Naive thymus-derived CD4-positive, alpha-beta T cell (primary cell): ENCODE measurements at regions of chr2 and their contacts with region 1.

Region 1: GRCh38 chr2:191566344-191566743 is 111.6 kb upstream of the NABP1 start:
- DNase-seq: peak; percentile 16 to 64 (median 42)
- ATAC-seq: peak; percentile 72
- H3K4me3 ChIP-seq: no peak overlapping the region
- H3K4me3 Mint-ChIP-seq: no peak overlapping the region
- H3K27ac ChIP-seq: no peak overlapping the region
- H3K27ac Mint-ChIP-seq: no peak overlapping the region
- H3K4me1 ChIP-seq: peaks cover 8 to 14% of the 10 kb centered on the region in 2 donors
- H3K4me1 Mint-ChIP-seq: peaks cover 14 to 34% (median 22%) of the 10 kb centered on the region in 7 donors
- H3K27me3 ChIP-seq: peaks cover 0 to 7% of the 10 kb centered on the region in 2 donors
- H3K27me3 Mint-ChIP-seq: peaks cover 4 to 69% (median 13%) of the 10 kb centered on the region in 5 donors

Region 2: GRCh38 chr2:191691016-191691735 is 124.8 kb after region 1 on chr2:
- CTCF ChIA-PET with region 1: interaction called, 33 read pairs
- POLR2A ChIA-PET with region 1: interaction called, 8 read pairs
- intact Hi-C with region 1: loop called (anchors 1 kb)
- DNase-seq: peak in 7 of 9 donors; percentile 44 to 69 (median 61)
- ATAC-seq: peak; percentile 93
- H3K4me3 ChIP-seq: no peak overlapping the region
- H3K4me3 Mint-ChIP-seq: no peak overlapping the region
- H3K27ac ChIP-seq: no peak overlapping the region
- H3K27ac Mint-ChIP-seq: peak overlapping the region in 5 of 9 donors; percentile 31 to 61 (median 44)
- H3K4me1 ChIP-seq: peaks cover 3 to 11% of the 10 kb centered on the region in 2 donors
- H3K4me1 Mint-ChIP-seq: peaks cover 8 to 28% (median 15%) of the 10 kb centered on the region in 7 donors
- H3K27me3 ChIP-seq: no peaks in the 10 kb centered on the region
- H3K27me3 Mint-ChIP-seq: no peaks in the 10 kb centered on the region

Region 3: DNA sequence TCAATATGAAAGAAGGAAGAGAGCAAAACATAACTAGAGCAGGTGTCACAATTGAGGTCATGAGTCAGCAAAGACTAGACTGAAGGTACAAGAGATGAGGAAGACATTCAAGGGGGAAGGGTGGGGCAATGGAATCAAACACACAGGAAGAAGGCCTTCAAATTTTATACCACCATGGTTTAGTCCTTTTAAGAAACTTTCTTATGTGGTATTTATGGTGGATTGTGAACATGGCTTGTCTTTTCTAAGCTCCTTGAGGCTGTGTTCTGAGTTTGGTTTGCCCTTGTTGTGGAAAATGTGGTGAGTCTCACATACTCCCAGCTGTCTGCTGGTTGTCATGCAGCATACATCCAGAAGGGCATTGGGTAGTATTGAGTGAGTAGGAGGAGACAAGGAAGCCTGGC is 173.7 kb after region 1 on chr2:
- CTCF ChIA-PET with region 1: no interaction called
- POLR2A ChIA-PET with region 1: no interaction called
- intact Hi-C with region 1: loop called in 1 of 2 experiments (anchors 1 kb)
- DNase-seq: peak in 8 of 9 donors; percentile 42 to 83 (median 78)
- ATAC-seq: peak; percentile 95
- H3K4me3 ChIP-seq: no peak overlapping the region
- H3K4me3 Mint-ChIP-seq: peak overlapping the region; percentile 0 to 62 (median 21)
- H3K27ac ChIP-seq: no peak overlapping the region
- H3K27ac Mint-ChIP-seq: peak overlapping the region; percentile 0 to 89 (median 44)
- H3K4me1 ChIP-seq: peaks cover 14% of the 10 kb centered on the region in 2 donors
- H3K4me1 Mint-ChIP-seq: peaks cover 13 to 18% (median 13%) of the 10 kb centered on the region in 7 donors
- H3K27me3 ChIP-seq: no peaks in the 10 kb centered on the region
- H3K27me3 Mint-ChIP-seq: peaks cover 10 to 45% (median 21%) of the 10 kb centered on the region in 5 donors

Region 4: DNA sequence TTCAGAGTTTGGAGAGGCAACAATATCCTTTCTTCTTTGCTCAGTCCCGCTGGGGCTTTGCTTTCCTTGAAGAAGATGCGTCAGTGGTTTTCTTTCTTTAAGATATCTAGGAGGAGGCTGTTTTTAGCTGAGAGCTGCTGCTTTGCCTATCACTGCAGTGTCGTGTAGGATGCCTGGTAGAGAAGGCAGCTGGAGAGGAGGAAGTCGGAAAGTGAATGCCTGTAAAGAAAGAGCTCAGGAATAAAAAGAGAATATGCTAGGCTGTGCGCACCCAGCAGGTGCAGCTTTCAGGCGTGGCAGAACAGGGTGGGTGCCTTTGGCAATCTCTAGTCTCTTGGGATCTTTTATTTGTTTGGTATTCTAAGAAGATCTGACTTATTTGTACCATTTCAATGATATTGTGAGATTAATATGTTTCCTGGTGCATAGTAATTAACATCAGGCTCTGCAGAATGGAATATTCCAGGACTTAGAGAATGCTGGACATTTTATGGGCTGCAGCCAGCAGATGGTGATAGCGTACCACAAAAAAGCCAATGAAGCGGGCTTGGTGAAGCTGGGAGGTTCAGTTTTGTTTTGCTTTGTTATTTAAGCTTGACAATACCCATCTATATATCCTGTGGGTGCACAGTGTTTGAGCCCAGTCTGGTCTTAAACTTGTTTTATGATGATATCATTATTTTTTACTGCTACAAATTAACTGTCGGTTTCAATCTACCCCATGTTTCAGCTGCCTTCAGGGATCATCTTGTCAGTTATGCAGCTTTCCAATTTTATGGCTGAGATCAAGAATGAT is 245.7 kb after region 1 on chr2:
- CTCF ChIA-PET with region 1: no interaction called
- POLR2A ChIA-PET with region 1: no interaction called
- intact Hi-C with region 1: loop called in 1 of 2 experiments (anchors 5 kb)
- DNase-seq: peak in 5 of 9 donors; percentile 3 to 22 (median 11)
- ATAC-seq: peak; percentile 57
- H3K4me3 ChIP-seq: no peak overlapping the region
- H3K4me3 Mint-ChIP-seq: no peak overlapping the region
- H3K27ac ChIP-seq: no peak overlapping the region
- H3K27ac Mint-ChIP-seq: no peak overlapping the region
- H3K4me1 ChIP-seq: no peaks in the 10 kb centered on the region
- H3K4me1 Mint-ChIP-seq: no peaks in the 10 kb centered on the region
- H3K27me3 ChIP-seq: no peaks in the 10 kb centered on the region
- H3K27me3 Mint-ChIP-seq: peaks cover 4 to 34% (median 22%) of the 10 kb centered on the region in 5 donors